Dorsolateral prefrontal cortex (tissue), 120 donors: ENCODE measurements at regions of chr17 and their contacts with region 1.

Region 1: GRCh38 chr17:6666077-6666521 is 14.5 kb downstream of the C17orf100 start:
- DNase-seq: peak in 9 of 10 donors; percentile 61 to 81 (median 78)
- H3K4me3 ChIP-seq: no peak overlapping the region
- H3K27ac ChIP-seq: no peak overlapping the region
- H3K27me3 ChIP-seq: peaks cover 0 to 3% (median 0%) of the 10 kb centered on the region in 45 donors
- CTCF ChIP-seq: peak; percentile 68 to 94 (median 86)

Region 2: GRCh38 chr17:6831661-6832263 is 165.7 kb after region 1 on chr17 and contains the start of gene TEKT1:
- intact Hi-C with region 1: loop called in 1 of 2 experiments (anchors 10 kb)
- DNase-seq: peak; percentile 16 to 85 (median 77)
- H3K4me3 ChIP-seq: peak within 1 kb of the TSS; percentile 6 to 75 (median 56)
- H3K27ac ChIP-seq: no peak within 1 kb of the TSS
- H3K27me3 ChIP-seq: peaks cover 0 to 71% (median 15%) of the 10 kb centered on the region in 45 donors
- CTCF ChIP-seq: no peak
- total RNA-seq, gene TEKT1: 0.10 to 7.3 (median 0.80) TPM in 118 of 120 experiments, not detected in the others

Region 3: GRCh38 chr17:6853764-6854442 is 187.8 kb after region 1 on chr17:
- intact Hi-C with region 1: loop called in 1 of 2 experiments (anchors 5 kb)
- DNase-seq: peak in 4 of 10 donors; percentile 22 to 63 (median 42)
- H3K4me3 ChIP-seq: peak overlapping the region in 54 of 59 donors; percentile 4 to 65 (median 42)
- H3K27ac ChIP-seq: peak overlapping the region in 9 of 59 donors; percentile 9 to 66 (median 36)
- H3K27me3 ChIP-seq: peaks cover 0 to 12% (median 0%) of the 10 kb centered on the region in 45 donors
- CTCF ChIP-seq: peak in 40 of 56 donors; percentile 11 to 54 (median 26)

Region 4: DNA sequence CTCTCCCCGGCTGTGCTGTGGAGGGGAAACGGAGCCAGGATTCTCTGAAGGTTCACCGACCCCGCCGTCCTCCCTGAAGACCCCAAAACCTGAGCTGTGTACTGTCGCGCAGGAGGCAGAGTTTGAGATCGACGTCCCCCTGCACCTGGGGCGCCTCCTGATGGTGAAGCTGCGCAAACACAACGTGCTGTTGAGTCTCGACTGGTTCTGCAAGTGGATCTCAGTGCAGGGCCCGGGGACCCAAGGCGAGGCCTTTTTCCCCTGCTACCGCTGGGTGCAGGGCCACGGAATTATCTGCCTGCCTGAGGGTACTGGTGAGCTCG is 228.1 kb after region 1 on chr17:
- intact Hi-C with region 1: loop called in 1 of 2 experiments (anchors 10 kb)
- DNase-seq: peak in 4 of 10 donors; percentile 25 to 57 (median 40)
- H3K4me3 ChIP-seq: peak overlapping the region in 52 of 59 donors; percentile 20 to 63 (median 44)
- H3K27ac ChIP-seq: no peak overlapping the region
- H3K27me3 ChIP-seq: peaks cover 0 to 10% (median 0%) of the 10 kb centered on the region in 45 donors
- CTCF ChIP-seq: peak in 47 of 56 donors; percentile 12 to 60 (median 40)

Region 5: DNA sequence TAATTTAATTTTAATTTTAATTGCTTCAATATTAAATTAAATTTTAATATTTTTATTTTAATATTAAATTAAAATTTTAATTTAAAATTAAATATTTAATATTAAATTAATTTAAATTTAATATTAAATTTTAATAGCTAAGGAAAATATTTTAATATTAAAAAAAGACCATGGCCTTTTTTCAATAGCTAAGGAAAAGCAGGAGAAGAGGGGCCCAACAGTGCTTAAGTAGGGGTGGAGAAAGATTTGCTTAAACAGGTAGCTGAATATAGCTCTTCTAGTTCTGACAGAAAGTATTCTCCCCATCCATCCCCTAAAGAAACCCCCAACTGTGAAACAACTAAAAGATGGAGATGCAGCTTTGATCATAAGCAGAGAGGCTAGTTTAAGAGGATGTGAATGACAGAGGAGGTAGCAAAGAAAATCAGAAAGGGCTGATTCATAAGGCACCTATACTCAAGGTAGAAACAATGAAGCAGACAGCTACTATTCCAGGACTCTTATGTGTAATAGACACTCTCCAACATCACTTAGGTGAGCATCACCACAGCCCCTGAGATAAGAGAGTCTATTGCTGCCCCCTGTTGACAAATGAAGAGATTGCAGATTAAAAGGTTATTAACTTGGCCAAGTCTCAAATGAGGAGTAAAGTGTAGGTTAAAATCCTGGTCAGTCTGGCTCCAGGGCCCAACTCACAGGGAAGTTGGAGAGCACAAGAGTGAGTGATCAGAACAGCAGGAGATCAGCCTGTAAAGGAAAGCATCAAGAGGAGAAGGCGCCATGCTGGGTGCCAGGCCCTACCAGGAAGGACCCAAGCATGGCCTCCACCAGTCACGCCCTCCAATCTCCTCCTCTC is 338.5 kb after region 1 on chr17:
- intact Hi-C with region 1: loop called in 1 of 2 experiments (anchors 5 kb)
- DNase-seq: no peak
- H3K4me3 ChIP-seq: no peak overlapping the region
- H3K27ac ChIP-seq: no peak overlapping the region
- H3K27me3 ChIP-seq: no peaks in the 10 kb centered on the region
- CTCF ChIP-seq: peak; percentile 39 to 90 (median 76)